MCF 10A (cell line): ENCODE measurements at regions of chr14 and their contacts with region 1.

Region 1: DNA sequence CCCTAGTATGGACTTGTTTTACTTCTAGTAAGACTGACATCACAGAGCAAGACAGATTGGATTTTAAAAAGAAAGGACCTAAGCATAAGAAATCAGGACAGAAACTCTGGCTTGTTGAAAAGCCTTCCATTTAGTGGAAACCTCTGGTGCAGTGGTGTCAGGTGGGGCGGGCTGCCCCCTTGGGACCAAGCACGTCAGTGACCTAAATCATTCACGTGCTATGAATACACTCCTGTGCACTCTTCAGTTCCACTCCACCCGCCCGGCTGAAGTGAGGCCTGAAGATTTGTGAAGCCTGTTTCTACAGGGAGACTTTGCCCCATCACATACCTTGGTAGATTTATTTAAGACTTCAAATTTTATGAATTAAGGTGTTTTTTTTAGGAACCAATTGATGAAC is 58.2 kb upstream of the STRN3 start:
- DNase-seq: no peak
- H3K4me3 Mint-ChIP-seq: no peak overlapping the region
- H3K27ac Mint-ChIP-seq: no peak overlapping the region
- H3K4me1 Mint-ChIP-seq: no peaks in the 10 kb centered on the region
- H3K27me3 Mint-ChIP-seq: no peaks in the 10 kb centered on the region
- CTCF ChIP-seq: no peak

Region 2: GRCh38 chr14:30756596-30756995 is 327.8 kb before region 1 on chr14:
- CTCF ChIA-PET with region 1: no interaction called
- POLR2A ChIA-PET with region 1: no interaction called
- intact Hi-C with region 1: no loop called
- DNase-seq: no peak
- H3K4me3 Mint-ChIP-seq: no peak overlapping the region
- H3K27ac Mint-ChIP-seq: no peak overlapping the region
- H3K4me1 Mint-ChIP-seq: no peaks in the 10 kb centered on the region
- H3K27me3 Mint-ChIP-seq: no peaks in the 10 kb centered on the region
- CTCF ChIP-seq: no peak

Region 3: GRCh38 chr14:30988509-30988908 is 95.9 kb before region 1 on chr14:
- CTCF ChIA-PET with region 1: interaction called, 21 read pairs
- POLR2A ChIA-PET with region 1: no interaction called
- intact Hi-C with region 1: no loop called
- DNase-seq: no peak
- H3K4me3 Mint-ChIP-seq: no peak overlapping the region
- H3K27ac Mint-ChIP-seq: no peak overlapping the region
- H3K4me1 Mint-ChIP-seq: peaks cover 24% of the 10 kb centered on the region
- H3K27me3 Mint-ChIP-seq: no peaks in the 10 kb centered on the region
- CTCF ChIP-seq: no peak

Region 4: DNA sequence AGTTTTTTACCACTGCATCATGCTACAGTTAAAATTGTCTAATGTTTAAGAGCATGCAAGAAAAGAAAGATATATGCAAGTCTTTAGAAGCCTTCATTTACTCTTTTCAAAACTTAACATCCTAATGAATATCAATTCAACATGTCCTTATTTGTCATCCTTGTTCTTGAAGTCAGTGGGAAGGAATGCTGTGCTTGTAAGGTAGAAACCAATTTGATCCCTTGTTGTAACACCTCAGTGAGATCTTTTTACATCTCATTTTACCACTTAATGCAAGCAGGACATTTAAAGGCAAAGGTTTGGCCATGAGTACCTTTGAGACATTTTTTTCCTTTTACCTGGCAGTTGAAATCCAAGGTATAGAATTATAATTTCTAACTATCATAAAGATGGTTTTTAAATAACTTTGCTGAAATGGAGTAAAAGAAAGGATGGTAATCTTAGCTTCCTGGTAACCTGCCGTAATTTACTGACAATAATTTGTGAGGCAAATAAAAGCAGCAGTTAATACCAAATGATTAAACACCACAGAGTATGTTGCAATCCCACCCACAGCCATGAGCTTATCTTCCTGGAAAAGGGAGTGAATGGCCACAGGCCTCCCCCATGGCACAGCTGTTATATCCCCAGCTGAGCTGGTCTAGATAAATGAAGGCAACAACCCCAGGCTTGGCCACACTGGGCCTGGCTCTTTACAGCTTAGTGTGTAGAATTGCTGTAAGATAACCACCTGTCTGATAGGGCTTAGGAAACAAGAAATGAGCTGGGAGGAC is 25.0 kb before region 1 on chr14:
- CTCF ChIA-PET with region 1: interaction called, 13 read pairs
- POLR2A ChIA-PET with region 1: no interaction called
- intact Hi-C with region 1: no loop called
- DNase-seq: peak; percentile 82
- H3K4me3 Mint-ChIP-seq: no peak overlapping the region
- H3K27ac Mint-ChIP-seq: peak overlapping the region; percentile 70
- H3K4me1 Mint-ChIP-seq: peaks cover 26% of the 10 kb centered on the region
- H3K27me3 Mint-ChIP-seq: no peaks in the 10 kb centered on the region
- CTCF ChIP-seq: no peak

Region 5: DNA sequence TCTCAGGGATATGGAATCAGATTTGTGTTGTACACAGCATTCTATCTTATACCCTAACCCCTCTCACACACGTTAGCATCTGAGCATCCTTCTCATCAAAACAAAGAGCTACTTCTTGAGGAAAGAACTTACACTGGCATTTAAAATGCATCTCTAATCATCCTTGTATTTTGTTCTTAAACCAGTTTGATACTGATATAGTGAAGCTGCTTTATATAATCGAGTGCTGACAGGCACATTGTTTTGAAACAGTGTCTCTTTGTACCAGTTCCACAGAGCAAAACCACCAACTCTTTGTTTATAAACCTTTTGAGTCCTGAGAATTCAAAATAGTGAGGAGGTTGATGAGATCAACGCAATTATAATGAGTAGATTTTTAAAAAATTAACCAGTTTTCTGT is 394.6 kb after region 1 on chr14:
- CTCF ChIA-PET with region 1: no interaction called
- POLR2A ChIA-PET with region 1: no interaction called
- intact Hi-C with region 1: no loop called
- DNase-seq: no peak
- H3K4me3 Mint-ChIP-seq: no peak overlapping the region
- H3K27ac Mint-ChIP-seq: no peak overlapping the region
- H3K4me1 Mint-ChIP-seq: no peaks in the 10 kb centered on the region
- H3K27me3 Mint-ChIP-seq: no peaks in the 10 kb centered on the region
- CTCF ChIP-seq: no peak